PC-3 (cell line): ENCODE measurements at regions of chr1 and their contacts with region 1.

Region 1: GRCh38 chr1:153510984-153511410 is 24.8 kb downstream of the S100A6 start:
- DNase-seq: peak; percentile 92
- ATAC-seq: peak; percentile 39
- H3K4me3 ChIP-seq: no peak overlapping the region
- H3K27ac ChIP-seq: peak overlapping the region; percentile 45
- H3K4me1 ChIP-seq: peaks cover 76% of the 10 kb centered on the region
- H3K27me3 ChIP-seq: no peaks in the 10 kb centered on the region
- CTCF ChIP-seq: peak; percentile 99

Region 2: DNA sequence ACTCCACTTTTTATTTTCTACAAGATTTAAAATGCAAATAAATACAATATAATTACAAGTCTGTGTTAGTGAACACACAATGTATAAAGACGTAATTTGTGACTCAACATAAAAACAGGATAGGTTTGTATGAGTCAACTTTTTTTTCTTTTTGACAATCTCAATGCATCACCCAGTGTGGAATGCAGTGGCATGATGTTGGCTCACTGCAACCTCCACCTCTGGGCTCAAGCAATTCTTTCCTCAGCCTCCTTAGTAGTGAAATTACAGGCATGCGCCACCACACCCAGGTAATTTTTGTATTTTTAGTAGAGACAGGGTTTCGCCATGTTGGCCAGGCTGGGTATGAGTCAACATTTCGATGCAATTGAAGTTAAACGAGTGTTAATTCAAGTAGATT is 410.8 kb before region 1 on chr1:
- CTCF ChIA-PET with region 1: no interaction called
- POLR2A ChIA-PET with region 1: no interaction called
- intact Hi-C with region 1: no loop called
- DNase-seq: peak; percentile 97
- ATAC-seq: peak; percentile 94
- H3K4me3 ChIP-seq: 0 out of 2 replicates have a peak overlapping the region, but pooled peaks have one; percentile 10
- H3K27ac ChIP-seq: peak overlapping the region; percentile 81
- H3K4me1 ChIP-seq: peaks cover 18% of the 10 kb centered on the region
- H3K27me3 ChIP-seq: no peaks in the 10 kb centered on the region
- CTCF ChIP-seq: no peak

Region 3: DNA sequence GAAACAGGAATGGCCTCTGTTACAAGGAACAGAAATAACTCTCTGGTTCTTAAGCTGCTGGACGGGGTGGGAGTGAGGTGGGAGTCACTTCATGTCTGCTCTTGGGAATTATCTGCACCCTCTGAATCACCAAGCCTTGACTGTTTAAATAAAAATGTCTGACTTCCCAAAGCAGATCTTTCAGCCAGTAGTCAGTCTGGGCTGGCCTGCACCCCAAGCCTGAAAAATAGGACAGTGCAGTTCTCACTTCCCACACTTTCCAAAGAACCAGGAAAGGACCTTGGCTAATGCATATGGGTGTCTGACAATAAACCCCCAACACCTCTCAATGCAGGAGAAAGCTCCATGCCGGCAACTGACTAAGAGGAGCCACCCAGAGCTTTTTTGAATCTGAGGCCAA is 51.3 kb before region 1 on chr1:
- CTCF ChIA-PET with region 1: no interaction called
- POLR2A ChIA-PET with region 1: no interaction called
- intact Hi-C with region 1: no loop called
- DNase-seq: no peak
- ATAC-seq: no peak
- H3K4me3 ChIP-seq: no peak overlapping the region
- H3K27ac ChIP-seq: no peak overlapping the region
- H3K4me1 ChIP-seq: no peaks in the 10 kb centered on the region
- H3K27me3 ChIP-seq: peaks cover 48% of the 10 kb centered on the region
- CTCF ChIP-seq: no peak

Region 4: GRCh38 chr1:153545067-153546055 is 34.4 kb after region 1 on chr1 and contains the start of gene S100A4:
- CTCF ChIA-PET with region 1: interaction called, 5 read pairs
- POLR2A ChIA-PET with region 1: no interaction called
- intact Hi-C with region 1: loop called (anchors 5 kb)
- DNase-seq: peak; percentile 99
- ATAC-seq: peak; percentile 64
- H3K4me3 ChIP-seq: peak within 1 kb of the TSS; percentile 8; the same call in 1 of the 2 replicates
- H3K27ac ChIP-seq: peak within 1 kb of the TSS; percentile 82
- H3K4me1 ChIP-seq: peaks cover 69% of the 10 kb centered on the region
- H3K27me3 ChIP-seq: no peaks in the 10 kb centered on the region
- CTCF ChIP-seq: no peak
- total RNA-seq, gene S100A4: 32.2 and 55.8 TPM in 2 replicates

Region 5: GRCh38 chr1:153617675-153618074 is 106.7 kb after region 1 on chr1:
- CTCF ChIA-PET with region 1: interaction called, 8 read pairs
- POLR2A ChIA-PET with region 1: interaction called, 4 read pairs
- intact Hi-C with region 1: loop called (anchors 2 kb)
- DNase-seq: peak; percentile 96
- ATAC-seq: peak; percentile 71
- H3K4me3 ChIP-seq: no peak overlapping the region
- H3K27ac ChIP-seq: peak overlapping the region; percentile 87
- H3K4me1 ChIP-seq: peaks cover 49% of the 10 kb centered on the region
- H3K27me3 ChIP-seq: no peaks in the 10 kb centered on the region
- CTCF ChIP-seq: peak; percentile 95

Region 6: DNA sequence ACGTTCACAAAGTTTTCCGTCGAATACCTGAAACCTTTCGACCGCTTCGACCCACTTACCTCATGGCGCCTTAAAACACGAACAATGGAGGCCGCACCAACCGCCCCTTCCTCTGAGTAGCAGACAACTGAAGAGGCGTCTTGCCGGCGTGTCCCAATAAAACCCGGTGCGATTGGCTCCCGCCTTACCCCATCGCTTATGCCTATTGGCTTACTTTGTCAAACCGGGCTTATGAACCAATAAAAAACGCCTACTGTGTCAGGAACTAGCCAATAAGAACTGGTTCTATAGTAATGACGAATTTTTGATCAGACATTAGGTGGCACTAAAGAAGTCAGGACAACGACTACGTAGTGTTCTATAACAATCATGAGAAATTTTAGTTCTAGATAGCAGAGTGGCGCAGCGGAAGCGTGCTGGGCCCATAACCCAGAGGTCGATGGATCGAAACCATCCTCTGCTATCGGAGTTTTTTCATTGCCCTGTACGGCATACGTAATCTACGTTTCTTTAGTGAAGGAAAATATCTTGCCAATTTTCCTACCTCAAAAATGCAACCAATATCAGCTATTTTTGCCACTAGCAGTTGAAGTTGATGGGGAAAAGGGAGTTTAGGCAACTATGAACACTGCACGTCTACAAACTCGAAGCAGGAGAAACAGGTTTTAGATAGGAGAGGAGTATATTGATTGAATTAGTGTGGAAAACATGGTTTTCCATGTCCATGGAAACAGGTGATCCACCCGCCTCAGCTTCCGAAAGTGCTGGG is 160.0 kb after region 1 on chr1 and contains the start of gene ILF2:
- CTCF ChIA-PET with region 1: no interaction called
- POLR2A ChIA-PET with region 1: no interaction called
- intact Hi-C with region 1: loop called (anchors 2 kb)
- DNase-seq: peak; percentile 100
- ATAC-seq: peak; percentile 87
- H3K4me3 ChIP-seq: peak within 1 kb of the TSS; percentile 89
- H3K27ac ChIP-seq: peak within 1 kb of the TSS; percentile 52
- H3K4me1 ChIP-seq: peaks cover 17% of the 10 kb centered on the region
- H3K27me3 ChIP-seq: no peaks in the 10 kb centered on the region
- CTCF ChIP-seq: peak; percentile 54
- total RNA-seq, gene ILF2: 398 and 439 TPM in 2 replicates